Left cardiac atrium (tissue), 4 donors: ENCODE measurements at regions of chr1 and their contacts with region 1.

Region 1: GRCh38 chr1:201877877-201878401 is 10.8 kb upstream of the SHISA4 start:
- DNase-seq: no peak
- ATAC-seq: peak; percentile 46 to 70

Region 2: DNA sequence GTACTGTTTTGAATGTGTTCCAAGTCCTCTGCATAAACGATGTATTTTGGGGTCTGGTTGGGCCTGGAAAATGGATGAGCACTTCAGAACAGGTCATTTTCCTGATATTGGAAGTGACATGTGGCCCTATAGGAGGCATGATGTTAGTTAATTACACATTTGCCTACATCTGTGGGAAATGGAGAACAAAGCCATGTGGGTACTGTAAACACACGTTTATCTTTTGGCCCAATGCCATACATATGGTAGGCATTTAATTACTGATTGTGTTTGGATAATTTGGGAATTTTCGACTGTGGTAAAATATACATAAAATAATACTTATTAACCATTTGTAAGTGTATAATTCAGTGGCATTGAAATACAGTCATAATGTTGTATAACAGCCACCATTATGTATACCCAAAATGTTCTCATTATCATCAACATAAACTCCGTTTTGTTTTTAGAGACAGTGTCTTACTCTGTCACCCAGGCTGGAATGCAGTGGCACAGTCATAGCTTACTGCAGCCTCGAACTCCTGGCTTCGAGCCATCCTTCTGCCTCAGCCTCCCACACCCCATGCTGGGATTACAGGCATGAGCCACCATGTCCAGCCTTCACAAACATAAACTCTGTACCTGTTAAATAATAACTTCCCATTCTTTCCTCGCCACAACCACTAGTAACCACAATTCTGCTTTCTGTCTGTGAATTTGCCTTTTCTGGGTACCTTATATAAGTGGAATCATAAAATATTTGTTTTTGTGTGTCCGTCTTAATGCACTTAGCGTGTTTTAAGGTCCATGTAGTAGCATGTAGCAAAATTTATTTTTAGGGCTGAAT is 92.6 kb after region 1 on chr1:
- intact Hi-C with region 1: loop called in 1 of 2 experiments (anchors 5 kb)
- DNase-seq: no peak
- ATAC-seq: peak in 1 of 2 donors; percentile 43